ENCODE measurements at regions of chr7 and their contacts with region 1.

Region 1: GRCh38 chr7:105759670-105760550 is 116.5 kb downstream of the ATXN7L1 start:
- DNase-seq: peak in 7 of 14 experiments; percentile 8 to 54 (median 49)
- ATAC-seq: peak; percentile 25
- H3K4me3 ChIP-seq: no peak overlapping the region
- H3K4me3 Mint-ChIP-seq: no peak overlapping the region
- H3K27ac ChIP-seq: no peak overlapping the region
- H3K27ac Mint-ChIP-seq: peak overlapping the region; percentile 45
- H3K4me1 ChIP-seq: peaks cover 45% of the 10 kb centered on the region
- H3K4me1 Mint-ChIP-seq: peaks cover 35% of the 10 kb centered on the region
- H3K27me3 ChIP-seq: no peaks in the 10 kb centered on the region
- H3K27me3 Mint-ChIP-seq: no peaks in the 10 kb centered on the region
- CTCF ChIP-seq: peak; percentile 76

Region 2: GRCh38 chr7:105678811-105679495 is 81.0 kb before region 1 on chr7:
- CTCF ChIA-PET with region 1: no interaction called
- POLR2A ChIA-PET with region 1: interaction called, 12 read pairs
- intact Hi-C with region 1: loop called in 1 of 2 experiments (anchors 5 kb)
- DNase-seq: peak in 6 of 14 experiments; percentile 12 to 60 (median 50)
- ATAC-seq: peak; percentile 2
- H3K4me3 ChIP-seq: peak overlapping the region; percentile 55
- H3K4me3 Mint-ChIP-seq: peak overlapping the region; percentile 88
- H3K27ac ChIP-seq: peak overlapping the region; percentile 39 to 88
- H3K27ac Mint-ChIP-seq: peak overlapping the region; percentile 98
- H3K4me1 ChIP-seq: peaks cover 66% of the 10 kb centered on the region
- H3K4me1 Mint-ChIP-seq: peaks cover 88% of the 10 kb centered on the region
- H3K27me3 ChIP-seq: no peaks in the 10 kb centered on the region
- H3K27me3 Mint-ChIP-seq: no peaks in the 10 kb centered on the region
- CTCF ChIP-seq: no peak

Region 3: GRCh38 chr7:105691733-105692564 is 68.0 kb before region 1 on chr7:
- CTCF ChIA-PET with region 1: interaction called, 3 read pairs
- POLR2A ChIA-PET with region 1: interaction called, 12 read pairs
- intact Hi-C with region 1: no loop called
- DNase-seq: peak; percentile 50 to 94 (median 68)
- ATAC-seq: peak; percentile 82
- H3K4me3 ChIP-seq: peak overlapping the region; percentile 92
- H3K4me3 Mint-ChIP-seq: peak overlapping the region; percentile 87
- H3K27ac ChIP-seq: peak overlapping the region; percentile 94 to 97
- H3K27ac Mint-ChIP-seq: peak overlapping the region; percentile 98
- H3K4me1 ChIP-seq: peaks cover 53% of the 10 kb centered on the region
- H3K4me1 Mint-ChIP-seq: peaks cover 62% of the 10 kb centered on the region
- H3K27me3 ChIP-seq: no peaks in the 10 kb centered on the region
- H3K27me3 Mint-ChIP-seq: no peaks in the 10 kb centered on the region
- CTCF ChIP-seq: no peak

Region 4: DNA sequence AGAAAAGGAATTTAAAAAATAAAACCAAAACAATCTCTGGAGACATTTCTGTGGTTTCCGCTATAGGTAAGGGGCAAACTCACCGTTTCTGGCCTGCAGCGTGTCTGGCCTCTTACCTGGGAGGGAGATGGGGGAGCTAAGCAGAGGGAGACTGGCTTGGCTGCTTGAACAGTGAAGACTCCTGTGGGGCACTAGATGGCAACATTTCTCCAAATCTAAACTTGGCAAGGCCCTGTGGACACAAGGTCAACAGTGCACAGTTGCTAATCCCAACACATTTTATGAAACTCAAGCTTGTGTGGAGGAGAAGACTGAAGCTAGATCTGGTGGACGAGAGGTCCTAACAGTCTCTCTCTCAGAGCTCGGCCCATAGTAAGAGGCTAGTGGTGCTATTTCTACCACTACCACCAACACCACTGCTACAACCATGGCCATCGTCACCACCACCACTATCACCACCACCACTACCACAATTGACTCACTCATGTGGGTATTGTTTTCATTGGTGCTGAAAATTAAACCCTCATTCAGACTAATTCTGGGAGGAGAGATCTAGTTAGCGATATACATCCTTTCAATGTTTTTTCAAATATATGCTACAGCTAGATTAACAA is 174.8 kb after region 1 on chr7:
- CTCF ChIA-PET with region 1: no interaction called
- POLR2A ChIA-PET with region 1: no interaction called
- intact Hi-C with region 1: loop called in 1 of 2 experiments (anchors 5 kb)
- DNase-seq: peak in 4 of 14 experiments; percentile 6 to 33 (median 28)
- ATAC-seq: no peak
- H3K4me3 ChIP-seq: no peak overlapping the region
- H3K4me3 Mint-ChIP-seq: no peak overlapping the region
- H3K27ac ChIP-seq: no peak overlapping the region
- H3K27ac Mint-ChIP-seq: no peak overlapping the region
- H3K4me1 ChIP-seq: no peaks in the 10 kb centered on the region
- H3K4me1 Mint-ChIP-seq: peaks cover 24% of the 10 kb centered on the region
- H3K27me3 ChIP-seq: no peaks in the 10 kb centered on the region
- H3K27me3 Mint-ChIP-seq: no peaks in the 10 kb centered on the region
- CTCF ChIP-seq: no peak

Region 5: DNA sequence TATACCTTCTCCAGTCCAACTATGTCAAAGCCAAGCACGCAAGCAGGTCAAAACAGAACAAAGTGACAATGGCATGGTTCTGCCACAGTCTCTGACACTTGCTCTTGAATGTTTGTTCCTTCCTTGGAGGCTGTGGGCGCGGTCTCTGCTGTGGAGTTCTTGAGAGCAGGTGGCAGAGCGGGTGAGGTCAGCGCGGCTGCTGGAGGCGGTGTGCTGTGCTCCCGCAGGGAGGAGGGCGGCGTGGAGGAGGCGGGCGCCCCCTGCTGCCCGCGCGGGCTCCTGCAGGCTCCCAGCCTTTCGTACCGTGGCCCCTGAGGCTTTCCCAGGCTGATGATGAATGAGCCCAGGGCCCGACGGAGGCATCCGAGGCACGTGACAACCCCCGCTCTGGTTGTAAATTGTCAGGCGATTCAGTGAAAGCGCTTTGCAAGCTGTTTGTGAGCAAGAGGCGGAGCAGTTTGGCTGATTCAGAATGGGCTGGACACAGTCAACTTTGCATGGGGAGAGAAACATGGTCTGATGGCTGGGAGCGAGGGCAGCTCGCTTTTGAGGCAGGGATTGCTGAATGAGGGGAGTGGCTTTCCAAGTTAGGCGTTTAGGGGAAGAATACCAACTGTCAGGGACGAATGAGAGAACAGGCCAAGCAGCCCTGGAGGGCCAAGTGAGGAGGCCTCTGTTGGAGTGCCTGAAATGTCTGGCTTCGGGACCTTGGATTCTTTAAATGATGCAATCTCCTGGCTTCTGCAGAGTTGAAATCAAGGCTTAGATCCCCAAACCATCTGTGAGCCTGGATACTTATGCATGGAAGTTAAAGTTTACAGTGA is 249.7 kb after region 1 on chr7:
- CTCF ChIA-PET with region 1: interaction called, 7 read pairs
- POLR2A ChIA-PET with region 1: no interaction called
- intact Hi-C with region 1: loop called (anchors 1 kb)
- DNase-seq: peak; percentile 70 to 91 (median 78)
- ATAC-seq: peak; percentile 97
- H3K4me3 ChIP-seq: no peak overlapping the region
- H3K4me3 Mint-ChIP-seq: peak overlapping the region; percentile 16
- H3K27ac ChIP-seq: no peak overlapping the region
- H3K27ac Mint-ChIP-seq: peak overlapping the region; percentile 38
- H3K4me1 ChIP-seq: peaks cover 21% of the 10 kb centered on the region
- H3K4me1 Mint-ChIP-seq: peaks cover 51% of the 10 kb centered on the region
- H3K27me3 ChIP-seq: no peaks in the 10 kb centered on the region
- H3K27me3 Mint-ChIP-seq: no peaks in the 10 kb centered on the region
- CTCF ChIP-seq: peak; percentile 99

Region 6: GRCh38 chr7:106041140-106041717 is 281.3 kb after region 1 on chr7:
- CTCF ChIA-PET with region 1: interaction called, 18 read pairs
- POLR2A ChIA-PET with region 1: interaction called, 5 read pairs
- intact Hi-C with region 1: loop called (anchors 1 kb)
- DNase-seq: peak in 5 of 14 experiments; percentile 23 to 61 (median 50)
- ATAC-seq: peak; percentile 22
- H3K4me3 ChIP-seq: no peak overlapping the region
- H3K4me3 Mint-ChIP-seq: no peak overlapping the region
- H3K27ac ChIP-seq: no peak overlapping the region
- H3K27ac Mint-ChIP-seq: peak overlapping the region; percentile 67
- H3K4me1 ChIP-seq: peaks cover 29% of the 10 kb centered on the region
- H3K4me1 Mint-ChIP-seq: peaks cover 50% of the 10 kb centered on the region
- H3K27me3 ChIP-seq: peaks cover 0 to 4% of the 10 kb centered on the region in 2 experiments
- H3K27me3 Mint-ChIP-seq: peaks cover 4% of the 10 kb centered on the region
- CTCF ChIP-seq: peak; percentile 57

Region 7: GRCh38 chr7:106153891-106154449 is 394.1 kb after region 1 on chr7:
- CTCF ChIA-PET with region 1: interaction called, 3 read pairs
- POLR2A ChIA-PET with region 1: no interaction called
- intact Hi-C with region 1: loop called in 1 of 2 experiments (anchors 5 kb)
- DNase-seq: peak; percentile 62 to 85 (median 69)
- ATAC-seq: peak; percentile 98
- H3K4me3 ChIP-seq: no peak overlapping the region
- H3K4me3 Mint-ChIP-seq: no peak overlapping the region
- H3K27ac ChIP-seq: no peak overlapping the region
- H3K27ac Mint-ChIP-seq: no peak overlapping the region
- H3K4me1 ChIP-seq: peaks cover 5% of the 10 kb centered on the region
- H3K4me1 Mint-ChIP-seq: peaks cover 5% of the 10 kb centered on the region
- H3K27me3 ChIP-seq: peaks cover 0 to 6% of the 10 kb centered on the region in 2 experiments
- H3K27me3 Mint-ChIP-seq: peaks cover 28% of the 10 kb centered on the region
- CTCF ChIP-seq: peak; percentile 92

Measured in CD4-positive, alpha-beta T cell (primary cell).